ENCODE measurements at regions of chr16 and their contacts with region 1.

Region 1: DNA sequence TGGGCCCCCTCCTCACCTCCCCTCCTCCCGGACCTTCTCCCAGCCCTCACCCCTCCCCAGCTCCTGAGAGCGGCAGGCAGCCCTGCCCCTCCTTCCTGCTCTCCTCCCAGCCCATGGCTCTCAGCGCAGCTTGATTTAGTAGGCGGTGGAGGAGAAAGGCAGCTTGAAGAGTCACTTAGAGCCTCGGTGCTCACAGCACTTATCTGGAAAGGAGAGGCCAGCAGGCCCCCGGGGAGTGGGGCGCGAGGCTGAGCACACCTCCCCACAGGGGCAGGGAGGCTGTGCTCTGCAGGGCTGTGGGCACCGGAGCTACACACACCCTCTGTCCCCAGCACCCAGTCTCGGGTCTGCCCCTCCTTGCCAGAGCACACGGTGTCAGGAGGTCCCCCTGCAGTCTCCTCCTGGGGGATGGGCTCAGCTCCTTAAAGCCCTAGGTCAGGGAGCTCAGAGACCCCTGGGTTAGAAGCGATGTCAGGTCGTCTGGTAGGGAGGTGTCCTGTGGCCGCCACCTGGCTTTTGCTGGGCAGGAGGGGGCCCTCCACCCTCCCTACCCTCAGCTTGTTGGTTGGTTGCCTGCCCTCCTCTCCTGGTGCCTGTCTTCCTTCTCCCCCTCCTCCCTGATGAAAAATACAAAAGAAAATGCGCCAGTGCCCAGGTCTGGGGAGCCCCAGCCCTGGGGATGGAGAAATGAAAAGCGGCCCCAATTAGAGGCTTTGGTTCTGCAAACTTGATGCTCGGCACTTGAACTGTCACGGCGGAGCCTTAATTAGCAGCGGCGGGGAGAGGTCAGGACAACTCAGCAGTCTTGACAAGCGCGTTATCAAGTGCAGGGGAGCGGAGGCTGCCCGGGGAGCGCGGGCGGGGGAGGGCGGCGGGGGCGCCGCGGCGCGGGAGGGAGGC is 151.1 kb upstream of the GSE1 start:
- DNase-seq: peak; percentile 73
- ATAC-seq: peak; percentile 77
- H3K4me3 Mint-ChIP-seq: peak overlapping the region; percentile 76
- H3K27ac Mint-ChIP-seq: no peak overlapping the region
- H3K4me1 Mint-ChIP-seq: peaks cover 32% of the 10 kb centered on the region
- H3K27me3 Mint-ChIP-seq: peaks cover 60% of the 10 kb centered on the region
- CTCF ChIP-seq: no peak

Region 2: DNA sequence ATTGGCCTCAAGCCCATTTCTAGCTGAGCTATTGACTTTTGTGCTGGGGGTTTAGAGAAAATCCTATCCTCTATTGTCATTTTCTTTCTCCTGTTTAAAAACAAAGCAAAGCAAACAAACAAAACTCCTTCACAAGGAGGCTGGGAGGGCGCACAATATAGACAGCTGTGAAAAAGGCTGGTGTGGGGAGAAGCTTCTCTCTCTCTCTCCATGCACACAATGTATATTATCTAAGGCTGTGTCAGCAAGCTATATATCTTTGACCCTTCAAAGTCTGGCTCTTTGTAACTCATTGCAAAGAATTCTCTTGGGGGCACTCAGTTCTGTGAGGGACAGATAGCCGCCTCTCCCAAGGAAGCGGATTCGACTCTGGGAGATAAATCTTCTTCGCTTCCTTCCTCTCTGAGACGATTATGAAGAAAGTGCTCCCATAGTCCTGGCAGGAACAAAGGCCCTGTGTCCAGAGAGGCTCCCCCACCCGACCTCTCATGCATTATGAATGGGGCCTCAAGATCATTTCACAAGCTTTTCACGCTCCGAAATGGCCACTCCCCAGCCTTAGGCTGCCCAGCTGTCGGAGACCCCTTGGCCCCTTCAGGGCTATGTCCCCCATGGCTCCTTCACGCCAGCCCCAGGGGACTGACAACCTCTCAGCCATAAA is 924.4 kb before region 1 on chr16:
- CTCF ChIA-PET with region 1: no interaction called
- POLR2A ChIA-PET with region 1: no interaction called
- DNase-seq: no peak
- ATAC-seq: no peak
- H3K4me3 Mint-ChIP-seq: no peak overlapping the region
- H3K27ac Mint-ChIP-seq: no peak overlapping the region
- H3K4me1 Mint-ChIP-seq: peaks cover 26% of the 10 kb centered on the region
- H3K27me3 Mint-ChIP-seq: no peaks in the 10 kb centered on the region
- CTCF ChIP-seq: no peak

Region 3: DNA sequence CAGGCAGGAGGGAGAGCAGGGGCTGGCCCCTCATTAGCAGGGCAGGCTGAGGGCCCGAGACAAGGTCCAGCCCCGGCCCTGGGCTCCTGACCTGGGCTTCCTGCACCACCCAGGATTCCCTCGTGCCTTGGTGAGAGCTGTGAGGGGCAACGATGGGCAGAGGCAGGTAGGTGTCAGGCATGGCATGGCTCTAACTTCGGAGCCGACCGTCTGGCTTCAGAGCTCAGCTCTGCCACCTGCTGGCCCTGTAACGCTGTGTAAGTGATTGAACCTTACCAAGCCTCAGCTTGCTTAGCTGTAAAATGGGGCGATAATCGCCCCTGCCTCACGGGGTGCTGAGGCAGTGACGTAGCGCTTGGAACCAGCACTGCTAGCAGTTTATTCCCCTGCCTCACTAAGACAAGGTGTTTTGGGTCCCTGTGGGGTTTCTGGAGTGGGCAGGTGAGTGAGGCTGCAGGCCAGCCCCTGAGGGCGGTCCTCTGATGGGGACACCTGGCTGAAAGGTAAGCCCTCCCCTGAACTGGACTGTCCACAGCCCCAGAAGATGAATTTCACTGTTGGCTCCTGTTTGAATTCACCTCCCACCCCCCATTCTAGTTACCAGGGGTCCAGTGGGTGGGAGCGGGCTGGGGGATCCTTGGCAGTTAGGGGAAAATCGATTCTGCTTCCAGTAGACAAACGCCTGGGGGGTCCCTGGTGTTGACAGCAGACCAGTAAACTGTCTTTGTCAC is 33.7 kb before region 1 on chr16:
- CTCF ChIA-PET with region 1: interaction called, 11 read pairs
- POLR2A ChIA-PET with region 1: interaction called, 3 read pairs
- DNase-seq: peak; percentile 63
- ATAC-seq: peak; percentile 59
- H3K4me3 Mint-ChIP-seq: no peak overlapping the region
- H3K27ac Mint-ChIP-seq: no peak overlapping the region
- H3K4me1 Mint-ChIP-seq: peaks cover 7% of the 10 kb centered on the region; the same call in 1 of the 2 replicates
- H3K27me3 Mint-ChIP-seq: no peaks in the 10 kb centered on the region
- CTCF ChIP-seq: peak; percentile 27; the same call in 1 of the 2 replicates

Region 4: GRCh38 chr16:85473909-85474620 is 12.0 kb after region 1 on chr16:
- CTCF ChIA-PET with region 1: interaction called, 20 read pairs
- POLR2A ChIA-PET with region 1: interaction called, 5 read pairs
- DNase-seq: no peak
- ATAC-seq: peak; percentile 52
- H3K4me3 Mint-ChIP-seq: no peak overlapping the region
- H3K27ac Mint-ChIP-seq: 0 out of 2 replicates have a peak overlapping the region, but pooled peaks have one; percentile 20
- H3K4me1 Mint-ChIP-seq: peaks cover 25% of the 10 kb centered on the region
- H3K27me3 Mint-ChIP-seq: 0 out of 2 replicates have a peak, but pooled peaks cover 2% of the 10 kb centered on the region
- CTCF ChIP-seq: no peak